H1 (cell line): ENCODE measurements at regions of chr1 and their contacts with region 1.

Region 1: DNA sequence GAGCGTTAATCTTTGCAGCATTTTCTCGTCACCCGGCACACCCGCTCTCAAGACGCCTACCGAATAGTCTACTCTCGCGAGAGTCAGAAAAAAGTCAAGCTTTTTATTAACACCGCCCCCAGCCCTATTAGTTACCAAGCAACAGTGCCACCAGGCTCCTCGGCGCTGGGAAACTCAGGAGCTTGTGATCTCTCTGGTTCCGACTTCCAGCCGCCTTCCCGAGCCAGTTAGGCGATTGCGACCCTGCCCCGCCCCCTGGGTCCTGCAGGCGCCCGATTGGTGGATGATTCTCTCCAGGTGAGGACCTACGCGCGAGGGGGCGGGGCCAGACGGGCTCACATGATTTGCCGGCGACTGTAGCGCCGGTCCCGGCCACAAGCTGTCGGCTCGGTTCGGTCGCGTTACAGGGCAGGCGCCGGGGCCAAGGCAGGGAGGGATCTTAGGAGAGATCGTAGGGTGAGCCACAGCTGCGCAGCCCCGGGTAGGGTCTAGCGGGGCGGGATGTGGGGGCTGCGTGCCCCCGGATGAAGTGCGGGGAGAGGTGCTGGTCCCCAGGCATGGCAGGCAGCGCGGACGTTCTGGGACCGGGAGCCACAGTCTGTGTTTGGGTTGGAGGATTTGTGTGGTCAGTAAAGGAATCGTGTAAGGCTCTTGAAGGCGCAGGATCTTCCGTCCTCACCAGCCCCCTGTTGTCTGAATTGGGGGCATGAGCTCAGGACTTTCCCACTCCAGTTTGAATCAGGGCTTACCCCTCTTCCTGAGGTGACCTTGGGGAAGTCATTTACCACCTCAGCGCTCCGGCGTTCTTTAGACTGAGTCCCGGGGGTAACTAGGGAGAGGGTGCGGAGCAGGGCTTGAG is at the start of gene PFKFB2:
- DNase-seq: peak; percentile 98 to 99
- H3K4me3 ChIP-seq: peak within 1 kb of the TSS; percentile 79 to 99 (median 96)
- H3K27ac ChIP-seq: peak within 1 kb of the TSS; percentile 90
- H3K4me1 ChIP-seq: peaks cover 0 to 8% (median 2%) of the 10 kb centered on the region in 4 experiments; a peak in 3 of 7 replicates
- H3K27me3 ChIP-seq: no peaks in the 10 kb centered on the region
- CTCF ChIP-seq: no peak
- EP300 ChIP-seq: no peak; a peak in 1 of 3 replicates
- POLR2A ChIP-seq: peak; percentile 88 to 93
- RAD21 ChIP-seq: peak in 1 of 2 experiments; percentile 1; a peak in 2 of 4 replicates
- total RNA-seq, gene PFKFB2: 17.8 and 19.1 TPM in 2 replicates

Region 2: DNA sequence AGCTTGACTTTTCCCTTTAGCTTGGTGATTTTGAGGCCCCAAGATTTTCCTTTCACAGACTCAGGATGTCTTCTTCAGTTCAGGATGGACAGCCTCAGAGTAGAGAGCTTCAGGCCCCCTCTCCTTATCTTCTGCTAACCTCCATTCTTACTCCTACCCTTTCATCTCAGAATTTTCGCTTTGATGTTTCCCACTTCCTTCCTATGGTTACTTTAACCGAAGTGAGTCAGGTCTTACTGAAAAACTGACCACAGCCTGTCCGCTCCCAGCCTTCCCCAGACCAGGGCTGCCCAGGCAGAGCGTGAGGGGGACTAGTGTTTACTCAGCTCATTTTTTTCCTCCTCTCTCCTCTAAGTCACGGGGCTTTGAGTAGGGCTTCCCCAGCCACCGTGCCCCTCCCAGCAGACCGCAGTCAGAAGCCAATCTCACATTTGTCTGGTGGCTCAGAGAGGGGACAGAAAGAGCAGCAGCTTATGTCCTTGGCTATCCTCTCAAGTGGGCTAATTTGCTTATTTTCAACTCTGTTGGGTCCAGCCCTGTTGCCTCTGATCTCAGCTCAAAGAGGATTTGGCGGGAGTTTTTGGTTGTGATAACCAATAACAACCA is 286.8 kb before region 1 on chr1:
- CTCF ChIA-PET with region 1: no interaction called
- POLR2A ChIA-PET with region 1: no interaction called
- DNase-seq: no peak
- H3K4me3 ChIP-seq: no peak overlapping the region
- H3K27ac ChIP-seq: no peak overlapping the region
- H3K4me1 ChIP-seq: no peaks in the 10 kb centered on the region; a peak in 1 of 7 replicates
- H3K27me3 ChIP-seq: peaks cover 0 to 2% (median 0%) of the 10 kb centered on the region in 4 experiments; a peak in 1 of 7 replicates
- CTCF ChIP-seq: no peak
- EP300 ChIP-seq: no peak
- POLR2A ChIP-seq: no peak
- RAD21 ChIP-seq: no peak

Region 3: GRCh38 chr1:206955476-206956451 is 97.4 kb before region 1 on chr1:
- CTCF ChIA-PET with region 1: no interaction called
- POLR2A ChIA-PET with region 1: no interaction called
- DNase-seq: no peak
- H3K4me3 ChIP-seq: no peak overlapping the region
- H3K27ac ChIP-seq: no peak overlapping the region
- H3K4me1 ChIP-seq: no peaks in the 10 kb centered on the region
- H3K27me3 ChIP-seq: peaks cover 0 to 3% (median 0%) of the 10 kb centered on the region in 4 experiments; a peak in 1 of 7 replicates
- CTCF ChIP-seq: no peak
- EP300 ChIP-seq: no peak
- POLR2A ChIP-seq: no peak
- RAD21 ChIP-seq: no peak

Region 4: GRCh38 chr1:206967096-206967849 is 85.9 kb before region 1 on chr1:
- CTCF ChIA-PET with region 1: no interaction called
- POLR2A ChIA-PET with region 1: no interaction called
- DNase-seq: no peak
- H3K4me3 ChIP-seq: no peak overlapping the region
- H3K27ac ChIP-seq: no peak overlapping the region
- H3K4me1 ChIP-seq: no peaks in the 10 kb centered on the region
- H3K27me3 ChIP-seq: no peaks in the 10 kb centered on the region
- CTCF ChIP-seq: no peak
- EP300 ChIP-seq: no peak
- POLR2A ChIP-seq: no peak
- RAD21 ChIP-seq: no peak

Region 5: GRCh38 chr1:207032528-207033017 is 20.6 kb before region 1 on chr1 and contains the start of gene C1orf116:
- CTCF ChIA-PET with region 1: interaction called, 40 read pairs
- POLR2A ChIA-PET with region 1: interaction called, 15 read pairs
- DNase-seq: peak; percentile 65 to 81
- H3K4me3 ChIP-seq: peak within 1 kb of the TSS; percentile 3 to 50 (median 29); a peak in 7 of 8 replicates
- H3K27ac ChIP-seq: peak within 1 kb of the TSS; percentile 55; the same call in 1 of the 2 replicates
- H3K4me1 ChIP-seq: peaks cover 4 to 17% (median 12%) of the 10 kb centered on the region in 4 experiments; a peak in 6 of 7 replicates
- H3K27me3 ChIP-seq: no peaks in the 10 kb centered on the region
- CTCF ChIP-seq: no peak
- EP300 ChIP-seq: no peak
- POLR2A ChIP-seq: peak in 1 of 2 experiments; percentile 55; a peak in 2 of 3 replicates
- RAD21 ChIP-seq: no peak
- total RNA-seq, gene C1orf116: 3.8 and 3.9 TPM in 2 replicates

Region 6: DNA sequence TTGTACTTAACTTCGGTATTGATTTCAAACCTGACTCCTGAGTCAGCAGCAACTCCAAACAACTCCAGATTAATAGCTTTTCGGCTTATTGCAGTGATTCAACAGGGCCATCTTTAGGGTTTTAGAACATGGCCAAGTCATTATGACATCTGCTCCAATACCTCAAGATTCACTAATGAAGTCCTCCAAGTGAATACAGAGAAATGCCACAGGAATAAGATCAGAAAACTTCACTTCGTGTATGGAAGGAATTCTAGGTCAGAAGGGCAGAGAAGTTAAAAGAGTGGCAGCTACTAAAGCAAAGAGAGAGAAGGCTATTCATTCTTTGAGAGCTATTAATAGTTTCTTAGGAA is 13.0 kb before region 1 on chr1:
- CTCF ChIA-PET with region 1: interaction called, 9 read pairs
- POLR2A ChIA-PET with region 1: interaction called, 12 read pairs
- DNase-seq: no peak
- H3K4me3 ChIP-seq: no peak overlapping the region
- H3K27ac ChIP-seq: no peak overlapping the region
- H3K4me1 ChIP-seq: no peaks in the 10 kb centered on the region; a peak in 1 of 7 replicates
- H3K27me3 ChIP-seq: no peaks in the 10 kb centered on the region
- CTCF ChIP-seq: no peak
- EP300 ChIP-seq: no peak
- POLR2A ChIP-seq: no peak
- RAD21 ChIP-seq: no peak

Region 7: DNA sequence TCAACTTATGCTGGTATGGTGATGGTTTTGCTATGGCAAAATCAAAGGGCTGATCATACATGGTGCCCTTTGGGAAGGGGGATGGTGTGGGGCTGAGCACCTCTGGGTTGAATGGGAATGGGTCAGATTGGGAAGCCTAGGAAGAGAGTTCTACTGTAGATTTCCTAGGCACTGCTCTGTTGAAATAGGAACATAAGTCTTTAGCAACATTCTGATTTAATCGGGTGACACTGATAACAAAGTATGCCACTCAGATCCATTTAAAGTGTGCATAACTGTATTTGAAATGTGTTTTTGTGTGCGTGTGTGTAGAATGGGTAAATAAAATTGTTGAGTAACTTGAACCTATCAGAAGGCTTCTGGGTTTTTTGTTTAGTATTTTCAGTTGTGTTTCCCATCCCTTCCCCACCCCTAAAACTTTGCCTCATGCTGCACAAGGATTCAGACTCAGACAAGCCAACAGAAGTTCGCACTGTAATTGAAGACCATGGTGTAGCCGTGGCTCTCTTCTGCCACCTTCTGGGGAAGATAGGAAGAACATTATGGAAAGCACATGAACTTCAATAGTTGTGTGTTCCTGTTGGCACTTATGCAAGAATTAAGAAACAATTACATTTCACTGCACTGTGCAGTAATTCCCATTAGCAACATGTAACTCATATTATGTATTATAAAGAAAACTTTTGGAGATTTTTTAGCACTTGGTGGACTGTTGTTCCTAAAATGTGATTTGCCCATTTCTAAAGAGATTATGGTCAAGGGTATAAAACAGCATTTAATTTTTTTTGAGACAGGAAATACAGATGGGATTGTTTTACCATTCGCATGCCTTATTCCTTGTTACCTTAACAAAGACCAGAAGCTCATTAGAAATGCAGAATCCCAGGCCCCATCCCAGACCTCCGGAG is 24.6 kb after region 1 on chr1:
- CTCF ChIA-PET with region 1: interaction called, 12 read pairs
- POLR2A ChIA-PET with region 1: no interaction called
- DNase-seq: peak in 1 of 2 experiments; percentile 69
- H3K4me3 ChIP-seq: no peak overlapping the region
- H3K27ac ChIP-seq: no peak overlapping the region
- H3K4me1 ChIP-seq: no peaks in the 10 kb centered on the region
- H3K27me3 ChIP-seq: no peaks in the 10 kb centered on the region
- CTCF ChIP-seq: peak; percentile 4 to 87 (median 77)
- EP300 ChIP-seq: no peak
- POLR2A ChIP-seq: no peak
- RAD21 ChIP-seq: peak; percentile 86 to 89